ENCODE measurements at regions of chr9 and their contacts with region 1.

Region 1: DNA sequence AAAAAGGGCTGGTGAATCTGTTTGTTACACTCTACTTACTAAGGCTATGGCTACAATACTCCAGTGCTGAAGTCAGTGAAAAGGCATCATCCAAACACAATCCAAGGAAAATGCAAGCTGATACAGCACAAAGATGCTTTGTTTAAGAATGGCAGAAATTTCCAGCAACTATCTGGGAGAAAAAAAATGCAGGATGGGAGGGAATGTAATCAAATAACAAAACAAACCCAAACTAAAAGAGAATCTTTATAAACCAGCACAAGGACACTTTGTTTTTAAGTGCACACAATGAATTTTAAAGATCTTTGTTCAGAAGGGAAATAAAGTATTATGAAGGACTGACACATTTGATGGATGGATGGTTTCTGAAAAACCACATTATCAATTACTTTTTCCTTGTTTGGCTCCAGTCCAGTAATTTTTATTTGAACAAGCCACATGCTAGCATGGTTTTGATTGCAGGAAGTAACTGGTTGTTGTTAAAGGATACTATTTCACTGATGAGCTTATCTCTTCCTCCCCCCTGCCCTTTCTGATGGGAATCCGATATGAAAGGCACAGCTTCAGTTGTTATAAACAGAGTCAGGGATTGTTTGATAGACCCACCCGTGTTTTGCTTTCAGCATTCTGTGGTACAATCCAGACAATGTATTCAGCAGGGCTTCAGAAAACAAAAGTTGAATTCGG is 12.1 kb upstream of the TLE4 start:
- DNase-seq: no peak
- ATAC-seq: no peak
- H3K4me3 ChIP-seq: no peak overlapping the region
- H3K4me3 Mint-ChIP-seq: no peak overlapping the region
- H3K27ac ChIP-seq: no peak overlapping the region
- H3K27ac Mint-ChIP-seq: no peak overlapping the region
- H3K4me1 ChIP-seq: no peaks in the 10 kb centered on the region
- H3K4me1 Mint-ChIP-seq: no peaks in the 10 kb centered on the region
- H3K27me3 ChIP-seq: peaks cover 0 to 5% of the 10 kb centered on the region in 2 experiments
- H3K27me3 Mint-ChIP-seq: peaks cover 4% of the 10 kb centered on the region
- CTCF ChIP-seq: no peak

Region 2: GRCh38 chr9:79537838-79538237 is 21.8 kb before region 1 on chr9:
- CTCF ChIA-PET with region 1: interaction called, 3 read pairs
- POLR2A ChIA-PET with region 1: no interaction called
- intact Hi-C with region 1: loop called in 1 of 2 experiments (anchors 2 kb)
- DNase-seq: no peak
- ATAC-seq: no peak
- H3K4me3 ChIP-seq: no peak overlapping the region
- H3K4me3 Mint-ChIP-seq: no peak overlapping the region
- H3K27ac ChIP-seq: no peak overlapping the region
- H3K27ac Mint-ChIP-seq: no peak overlapping the region
- H3K4me1 ChIP-seq: no peaks in the 10 kb centered on the region
- H3K4me1 Mint-ChIP-seq: peaks cover 2% of the 10 kb centered on the region
- H3K27me3 ChIP-seq: no peaks in the 10 kb centered on the region
- H3K27me3 Mint-ChIP-seq: no peaks in the 10 kb centered on the region
- CTCF ChIP-seq: no peak

Measured in CD8-positive, alpha-beta T cell (primary cell).